ENCODE measurements at regions of chr14 and their contacts with region 1.

Region 1: DNA sequence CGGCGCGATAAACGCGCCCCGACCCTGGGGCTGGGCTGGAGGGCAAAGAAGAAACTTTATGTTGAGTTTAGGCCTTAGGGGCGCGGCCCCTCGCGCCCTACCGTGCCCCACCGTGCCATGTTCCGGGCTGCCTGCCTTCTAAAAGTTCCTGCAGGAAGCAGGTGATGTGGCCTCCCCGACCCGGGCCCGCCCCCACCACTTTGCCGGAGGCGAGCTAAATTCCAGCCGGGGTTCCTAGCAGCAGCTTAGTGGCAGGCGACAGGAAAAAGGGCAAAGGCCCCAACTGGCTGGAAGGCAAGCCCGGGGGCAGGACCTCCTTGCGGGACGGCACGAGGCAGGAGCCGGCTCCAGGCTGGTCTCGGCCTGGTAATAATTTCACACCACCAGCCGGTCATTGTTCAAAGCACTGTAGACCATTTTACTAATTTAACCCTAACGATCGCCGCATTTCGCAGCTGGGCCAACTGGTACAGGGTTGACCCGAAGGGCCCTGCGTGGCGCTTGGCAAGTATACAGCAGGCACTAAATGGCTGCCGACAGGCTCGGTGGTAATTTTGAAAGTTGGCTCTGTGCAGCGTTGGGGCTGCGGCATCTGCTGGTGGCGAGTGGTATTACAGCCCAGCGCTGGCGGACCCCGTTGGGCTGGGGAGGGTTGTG is 895 bp upstream of the CCDC88C start:
- DNase-seq: peak in 41 of 42 donors; percentile 46 to 88 (median 74)

Region 2: GRCh38 chr14:91323671-91324605 is 94.6 kb before region 1 on chr14:
- intact Hi-C with region 1: loop called (anchors 2 kb)
- DNase-seq: peak; percentile 64 to 95 (median 88)

Region 3: DNA sequence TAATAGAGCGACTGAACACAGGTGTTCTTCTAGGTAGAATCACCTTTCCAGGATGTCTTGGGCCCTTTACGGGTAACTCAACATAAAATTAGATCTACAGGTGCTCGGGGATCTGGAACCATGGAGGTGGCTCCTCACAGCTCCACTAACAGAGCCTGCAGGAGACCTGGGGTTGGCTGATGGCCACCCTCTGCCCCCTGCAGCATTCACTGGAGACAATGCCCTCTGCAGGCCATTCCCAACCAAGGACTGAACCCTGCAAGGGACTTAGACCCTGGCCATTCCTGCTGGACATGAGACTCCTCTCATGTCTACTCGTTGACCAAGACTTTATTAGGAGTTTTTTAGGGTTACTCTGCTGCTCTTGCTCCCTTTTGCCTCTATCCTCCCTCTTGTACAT is 150.1 kb after region 1 on chr14:
- intact Hi-C with region 1: no loop called
- DNase-seq: no peak